ENCODE measurements at regions of chr1 and their contacts with region 1.

Region 1: GRCh38 chr1:12208764-12209494 is 20.9 kb upstream of the VPS13D start:
- DNase-seq: peak; percentile 86
- CTCF ChIP-seq: peak; percentile 92

Region 2: DNA sequence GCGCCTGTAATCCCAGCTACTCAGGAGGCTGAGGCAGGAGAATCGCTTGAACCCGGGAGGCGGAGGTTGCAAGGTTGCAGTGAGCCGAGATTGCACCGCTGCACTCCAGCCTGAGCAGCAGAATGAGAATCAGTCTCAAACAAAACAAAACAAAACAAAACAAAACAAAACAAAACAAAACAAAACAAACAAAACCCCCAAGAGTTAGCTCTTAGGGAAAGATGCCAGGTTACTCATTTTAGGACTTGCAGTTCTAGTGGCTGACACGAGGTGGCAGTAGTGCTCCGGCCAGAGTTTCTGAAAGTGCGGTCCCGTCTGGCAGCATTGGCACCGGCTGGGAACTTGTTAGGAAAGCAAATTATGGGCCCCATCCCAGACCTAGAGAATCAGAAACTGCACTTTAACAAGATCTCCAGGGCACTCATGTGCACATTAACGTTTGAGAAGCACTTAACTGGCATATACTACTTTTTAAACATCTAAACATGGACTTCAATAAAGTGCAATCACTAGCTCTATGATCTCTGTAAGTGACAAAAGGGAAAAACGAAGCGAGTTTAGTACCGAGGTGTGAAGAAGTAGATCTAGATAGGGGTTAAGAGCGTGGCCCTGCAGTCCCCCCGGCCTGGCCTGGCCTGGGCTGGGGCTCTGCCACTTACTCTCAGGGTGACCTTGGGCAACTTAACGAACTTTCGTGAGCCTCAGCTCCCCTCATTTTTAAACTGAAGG is 84.1 kb before region 1 on chr1:
- in situ Hi-C with region 1: loop called (anchors 5 kb)
- DNase-seq: peak; percentile 67
- CTCF ChIP-seq: peak; percentile 92

Measured in GM13977 (cell line).